ENCODE measurements at regions of chr17 and their contacts with region 1.

Region 1: GRCh38 chr17:979538-980405 is at the start of gene NXN:
- DNase-seq: peak; percentile 77 to 82
- ATAC-seq: peak; percentile 74 to 77
- H3K4me3 ChIP-seq: peak within 1 kb of the TSS; percentile 80 to 96 (median 88)
- H3K27ac ChIP-seq: peak within 1 kb of the TSS; percentile 88 to 96 (median 91)
- H3K4me1 ChIP-seq: peaks cover 43 to 45% of the 10 kb centered on the region in 2 donors
- H3K27me3 ChIP-seq: no peaks in the 10 kb centered on the region
- CTCF ChIP-seq: peak in 2 of 5 experiments; percentile 23 to 35
- POLR2A ChIP-seq: peak; percentile 91 to 97
- total RNA-seq, gene NXN: 55.6 to 86.4 (median 62.7) TPM

Region 2: DNA sequence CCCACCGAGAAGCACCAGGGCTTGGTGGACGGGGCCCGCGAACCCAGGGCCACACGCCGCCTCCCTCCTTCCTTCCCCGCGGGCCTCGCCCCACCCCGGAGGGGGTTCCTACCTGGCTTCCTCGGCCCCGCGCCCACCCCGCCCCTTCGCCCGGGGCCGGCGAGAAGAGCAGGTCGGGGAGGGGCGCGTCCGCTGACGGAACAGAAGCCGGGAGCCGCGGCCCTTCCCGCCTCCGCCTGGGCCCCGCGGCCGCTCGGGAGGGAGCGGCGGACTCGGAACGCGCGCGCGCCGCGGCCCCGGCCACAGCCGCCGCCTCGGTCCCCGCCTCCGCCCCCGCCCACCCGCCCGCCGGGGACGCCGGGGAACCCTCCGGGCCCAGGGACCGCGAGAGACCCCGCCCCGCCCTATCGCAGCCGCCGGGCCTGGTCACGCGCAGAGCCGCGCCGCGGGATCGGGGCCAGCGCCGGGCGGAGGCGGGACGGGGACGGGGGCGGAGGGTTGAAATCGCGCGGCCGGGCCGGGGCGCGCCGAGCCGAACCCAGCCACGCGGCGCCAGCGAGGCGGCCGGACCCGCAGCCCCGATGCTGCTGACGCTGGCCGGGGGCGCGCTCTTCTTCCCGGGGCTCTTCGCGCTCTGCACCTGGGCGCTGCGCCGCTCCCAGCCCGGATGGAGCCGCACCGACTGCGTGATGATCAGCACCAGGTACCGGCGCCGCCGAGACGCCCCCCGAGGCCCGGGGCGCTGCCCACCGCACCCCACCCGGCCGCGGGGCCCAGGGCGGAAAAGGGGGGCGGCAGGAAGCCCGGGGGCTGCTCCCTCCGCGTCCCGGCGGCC is 247.5 kb before region 1 on chr17 and contains the start of gene TLCD3A:
- in situ Hi-C with region 1: no loop called
- intact Hi-C with region 1: loop called (anchors 5 kb)
- DNase-seq: peak; percentile 40 to 45
- ATAC-seq: peak; percentile 65 to 72
- H3K4me3 ChIP-seq: peak within 1 kb of the TSS; percentile 67 to 77 (median 74)
- H3K27ac ChIP-seq: peak within 1 kb of the TSS; percentile 56 to 71 (median 66)
- H3K4me1 ChIP-seq: peaks cover 9 to 12% of the 10 kb centered on the region in 2 donors
- H3K27me3 ChIP-seq: no peaks in the 10 kb centered on the region
- CTCF ChIP-seq: no peak
- POLR2A ChIP-seq: peak in 1 of 2 donors; percentile 37
- total RNA-seq, gene TLCD3A: 0.39 to 1.4 (median 0.86) TPM

Region 3: DNA sequence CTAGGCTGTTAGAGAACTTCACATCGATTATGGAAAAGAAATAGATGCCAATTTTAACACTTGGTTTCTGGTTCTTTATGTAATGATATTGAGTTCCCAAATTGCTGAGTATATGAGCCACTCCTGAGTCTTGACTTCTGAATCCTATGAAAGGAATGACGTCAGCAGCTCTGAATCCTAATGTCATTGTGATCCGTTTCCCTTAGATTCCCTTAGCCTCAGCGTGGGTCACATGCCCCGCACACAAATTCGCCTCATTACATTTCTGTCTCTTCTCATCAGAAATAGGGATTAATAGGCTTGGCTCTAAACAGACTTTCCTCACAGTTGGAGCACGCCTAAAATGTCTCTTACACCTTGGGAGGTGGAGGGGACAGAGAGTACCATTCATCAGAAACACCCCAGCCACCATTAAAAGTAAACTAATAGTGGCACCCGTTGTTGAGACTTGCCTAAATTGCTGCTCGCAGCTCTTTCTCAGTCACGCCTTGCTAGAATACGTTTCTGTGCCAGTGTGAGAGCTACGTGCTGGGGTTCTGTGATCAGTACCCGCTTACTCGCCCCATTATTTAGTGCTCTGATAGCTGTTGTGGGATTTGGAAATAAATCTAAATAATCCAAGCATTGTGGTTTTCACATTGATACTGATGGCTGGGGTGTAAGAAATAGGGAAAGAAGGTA is 190.5 kb before region 1 on chr17:
- in situ Hi-C with region 1: loop called (anchors 5 kb)
- intact Hi-C with region 1: no loop called
- DNase-seq: peak in 1 of 2 donors; percentile 6
- ATAC-seq: no peak
- H3K4me3 ChIP-seq: no peak overlapping the region
- H3K27ac ChIP-seq: no peak overlapping the region
- H3K4me1 ChIP-seq: peaks cover 2% of the 10 kb centered on the region in 2 donors
- H3K27me3 ChIP-seq: no peaks in the 10 kb centered on the region
- CTCF ChIP-seq: no peak
- POLR2A ChIP-seq: no peak

Region 4: DNA sequence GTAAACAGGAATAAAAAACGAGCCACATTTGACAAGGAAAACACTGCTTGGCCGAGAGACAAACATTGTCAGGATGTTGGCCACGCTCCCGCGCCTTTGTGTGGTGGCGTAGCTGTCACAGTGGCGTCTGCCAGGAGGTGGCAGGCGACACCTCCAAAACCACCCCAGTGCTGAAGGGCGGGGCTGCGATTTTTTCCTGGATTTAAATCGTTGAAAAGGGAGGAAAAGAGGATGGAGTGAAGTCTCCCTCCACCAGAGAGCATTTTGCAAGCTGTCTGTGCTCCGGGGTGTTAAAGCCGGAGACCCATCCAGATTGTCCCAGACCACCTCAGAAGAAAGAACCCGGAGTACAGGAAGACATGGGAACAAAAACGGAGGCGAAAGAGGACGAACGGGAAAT is 184.9 kb before region 1 on chr17:
- in situ Hi-C with region 1: loop called in 3 of 4 experiments (anchors 5 kb)
- intact Hi-C with region 1: loop called (anchors 1 kb)
- DNase-seq: peak; percentile 79 to 82
- ATAC-seq: peak; percentile 76 to 80
- H3K4me3 ChIP-seq: peak overlapping the region; percentile 27 to 74 (median 51)
- H3K27ac ChIP-seq: peak overlapping the region; percentile 67 to 78 (median 74)
- H3K4me1 ChIP-seq: peaks cover 27 to 30% of the 10 kb centered on the region in 2 donors
- H3K27me3 ChIP-seq: no peaks in the 10 kb centered on the region
- CTCF ChIP-seq: peak; percentile 90 to 96 (median 92)
- POLR2A ChIP-seq: no peak

Region 5: DNA sequence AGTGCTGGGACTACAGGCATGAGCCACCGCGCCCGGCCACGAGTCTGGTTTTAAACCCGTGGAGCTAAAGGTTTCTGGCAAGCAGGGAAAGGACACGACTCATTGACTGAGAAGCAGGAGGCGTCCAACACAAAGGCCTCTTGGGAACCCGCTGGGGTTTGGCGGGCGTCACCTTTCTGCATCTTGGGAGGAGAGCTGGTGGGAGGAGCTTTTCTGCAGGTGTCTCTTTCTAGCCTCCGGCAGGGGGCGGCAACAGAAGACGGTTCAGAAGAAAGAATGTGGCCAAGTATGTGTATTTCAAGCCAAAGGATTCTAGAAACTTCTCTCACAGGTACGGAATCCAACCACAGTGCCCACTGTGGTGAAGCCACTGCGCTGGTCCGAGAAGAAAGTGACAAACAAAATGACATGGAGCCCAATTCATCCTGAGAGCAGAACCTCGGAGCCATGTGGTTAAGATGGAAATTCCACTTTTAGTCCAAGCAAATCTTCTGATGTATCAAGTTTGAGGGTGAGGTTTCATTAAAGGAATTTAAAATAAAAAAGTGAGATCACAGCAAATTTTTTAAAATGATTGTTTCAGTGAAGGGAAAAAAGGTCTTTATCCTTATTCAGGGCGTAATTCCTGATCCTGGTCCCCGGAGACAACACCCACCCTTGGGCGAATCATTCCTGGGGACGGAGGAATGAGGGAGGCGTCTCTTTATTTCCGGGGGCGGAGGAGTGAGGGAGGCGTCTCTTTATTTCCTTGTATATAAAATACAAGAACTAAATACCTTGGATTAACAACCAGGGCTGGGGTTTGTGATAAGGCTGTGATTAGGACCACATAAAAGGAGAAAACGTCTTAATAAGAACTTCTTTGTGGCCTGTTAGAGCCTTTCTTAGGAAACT is 100.0 kb before region 1 on chr17:
- in situ Hi-C with region 1: loop called in 1 of 4 experiments (anchors 10 kb)
- intact Hi-C with region 1: loop called (anchors 1 kb)
- DNase-seq: peak; percentile 57 to 79
- ATAC-seq: peak in 1 of 2 donors; percentile 10
- H3K4me3 ChIP-seq: no peak overlapping the region
- H3K27ac ChIP-seq: peak overlapping the region; percentile 85 to 99 (median 94)
- H3K4me1 ChIP-seq: peaks cover 45 to 53% of the 10 kb centered on the region in 2 donors
- H3K27me3 ChIP-seq: no peaks in the 10 kb centered on the region
- CTCF ChIP-seq: peak; percentile 28 to 77 (median 58)
- POLR2A ChIP-seq: no peak

Region 6: DNA sequence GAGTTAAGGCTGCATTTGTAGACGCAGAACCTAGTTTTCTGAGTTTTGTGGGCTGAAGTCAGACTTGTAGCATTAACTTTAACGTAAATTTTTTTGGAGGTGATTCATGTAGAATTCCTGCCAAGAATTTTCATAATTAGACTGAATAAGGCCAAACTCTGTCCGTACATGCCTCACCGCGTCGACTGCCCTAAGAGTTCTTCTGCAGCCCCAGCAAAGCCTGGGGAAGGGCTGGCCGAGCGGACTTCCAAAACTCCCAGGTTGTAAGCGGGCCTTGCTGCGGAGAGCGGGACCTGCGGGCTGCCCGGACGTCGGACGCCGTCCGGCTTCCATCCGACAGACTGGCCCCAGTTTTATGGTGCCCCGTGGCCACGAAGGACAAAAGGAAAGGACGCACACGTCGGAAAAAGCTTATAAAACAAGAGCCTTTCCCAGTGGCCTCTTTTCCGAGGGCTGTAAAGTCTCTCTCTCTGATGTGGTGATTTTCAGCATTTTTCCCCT is 75.7 kb before region 1 on chr17:
- in situ Hi-C with region 1: no loop called
- intact Hi-C with region 1: loop called (anchors 2 kb)
- DNase-seq: no peak
- ATAC-seq: no peak
- H3K4me3 ChIP-seq: no peak overlapping the region
- H3K27ac ChIP-seq: peak overlapping the region; percentile 0 to 100 (median 97)
- H3K4me1 ChIP-seq: peaks cover 24 to 25% of the 10 kb centered on the region in 2 donors
- H3K27me3 ChIP-seq: no peaks in the 10 kb centered on the region
- CTCF ChIP-seq: no peak
- POLR2A ChIP-seq: no peak

Region 7: DNA sequence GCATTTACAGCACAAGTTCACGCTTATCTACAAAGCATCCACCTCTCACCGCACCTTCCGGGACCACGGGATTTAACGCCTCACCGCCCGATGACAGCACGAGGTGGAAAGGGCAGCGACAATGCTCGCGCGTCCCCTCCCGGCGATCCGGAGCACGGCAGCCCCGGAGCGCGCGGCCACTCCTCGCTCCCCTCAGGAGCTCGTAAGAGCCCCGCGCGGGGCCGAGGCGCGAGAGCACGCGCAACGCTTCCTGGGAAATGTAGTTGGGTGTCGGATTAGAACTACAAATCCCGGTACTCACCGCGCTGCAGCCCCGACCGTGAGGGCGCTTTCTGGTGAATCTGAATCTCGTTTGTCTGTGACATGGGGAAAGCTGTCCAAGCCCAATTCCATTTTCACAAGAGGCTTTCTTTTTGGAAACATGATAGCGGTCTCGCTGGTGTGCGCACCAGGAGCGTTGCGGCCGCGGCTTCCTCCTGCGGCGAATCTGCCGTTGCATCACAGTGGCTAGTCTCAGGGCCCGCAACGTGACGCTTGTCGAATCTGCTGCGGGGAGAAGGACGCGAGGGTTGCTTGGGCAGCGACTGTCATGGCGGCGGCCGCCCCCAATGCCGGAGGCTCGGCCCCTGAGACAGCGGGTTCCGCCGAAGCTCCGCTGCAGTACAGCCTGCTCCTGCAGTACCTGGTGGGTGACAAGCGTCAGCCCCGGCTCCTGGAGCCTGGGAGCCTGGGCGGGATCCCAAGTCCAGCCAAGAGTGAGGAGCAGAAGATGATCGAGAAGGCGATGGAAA is 17.0 kb after region 1 on chr17 and contains the start of gene TIMM22:
- in situ Hi-C with region 1: no loop called
- intact Hi-C with region 1: loop called (anchors 1 kb)
- DNase-seq: peak; percentile 88 to 91
- ATAC-seq: peak; percentile 93 to 94
- H3K4me3 ChIP-seq: peak within 1 kb of the TSS; percentile 75 to 98 (median 97)
- H3K27ac ChIP-seq: peak within 1 kb of the TSS; percentile 88 to 95 (median 92)
- H3K4me1 ChIP-seq: peaks cover 40 to 41% of the 10 kb centered on the region in 2 donors
- H3K27me3 ChIP-seq: no peaks in the 10 kb centered on the region
- CTCF ChIP-seq: peak; percentile 97 to 99 (median 98)
- POLR2A ChIP-seq: peak; percentile 76 to 83
- total RNA-seq, gene TIMM22: 14.4 to 16.1 (median 15.3) TPM

Measured in gastrocnemius medialis (tissue), 4 donors.